ENCODE measurements at regions of chr2 and their contacts with region 1.

Region 1: GRCh38 chr2:168455648-168456520 is at the start of gene CERS6:
- DNase-seq: peak; percentile 99
- ATAC-seq: peak; percentile 97
- total RNA-seq, gene CERS6: 65.7 TPM

Region 2: GRCh38 chr2:168490015-168490874 is 34.4 kb after region 1 on chr2:
- intact Hi-C with region 1: loop called (anchors 2 kb)
- DNase-seq: no peak
- ATAC-seq: peak; percentile 76

Region 3: DNA sequence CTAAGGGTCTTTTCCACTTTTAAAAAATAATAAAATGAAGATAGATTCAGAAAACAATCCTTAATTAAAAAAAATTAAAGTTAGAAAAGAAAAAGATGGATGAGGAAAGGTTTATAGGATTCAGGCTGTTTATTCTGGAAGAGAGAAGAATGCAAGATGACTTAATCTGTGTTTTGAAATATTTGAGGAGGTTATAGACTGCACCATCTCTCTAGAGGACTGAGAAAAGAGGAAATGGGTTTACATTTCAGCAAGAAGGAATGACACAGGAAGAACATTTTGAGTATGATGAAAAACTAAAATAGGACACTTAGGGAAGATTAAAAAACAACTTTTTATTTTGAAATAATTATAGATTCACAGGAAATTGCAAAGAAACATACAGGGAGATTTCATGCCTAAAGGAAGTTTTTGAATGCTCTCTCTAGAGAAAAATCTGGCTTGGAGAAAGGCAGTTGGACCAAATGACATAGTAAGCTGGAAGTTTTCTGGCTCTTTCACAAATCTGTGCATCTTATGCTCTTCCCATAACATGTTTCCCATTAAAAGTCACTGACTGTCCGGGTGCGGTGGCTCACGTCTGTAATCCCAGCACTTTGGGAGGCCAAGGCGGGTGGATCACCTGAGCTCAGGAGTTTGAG is 75.2 kb after region 1 on chr2:
- intact Hi-C with region 1: loop called (anchors 2 kb)
- DNase-seq: no peak
- ATAC-seq: no peak

Region 4: DNA sequence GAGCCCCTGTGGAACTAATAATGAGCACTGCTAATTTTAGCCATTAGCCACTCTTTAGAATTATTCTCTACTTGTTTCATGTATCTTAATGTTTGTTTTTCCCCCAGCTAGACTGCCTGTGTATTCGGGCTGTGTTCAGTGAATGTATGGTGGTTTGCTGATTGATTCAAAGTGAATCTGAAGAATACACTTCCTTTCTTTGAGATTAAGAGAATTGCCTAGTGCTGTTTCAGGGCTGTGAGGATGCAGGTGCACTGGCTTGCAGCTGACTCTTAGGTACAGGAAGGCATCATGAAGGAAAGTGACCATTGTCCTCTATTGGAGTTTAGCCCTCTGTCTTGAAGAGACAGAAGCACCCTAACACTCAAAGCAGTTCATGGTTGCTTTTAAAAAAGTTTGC is 138.9 kb after region 1 on chr2:
- intact Hi-C with region 1: loop called (anchors 5 kb)
- DNase-seq: no peak
- ATAC-seq: no peak

Region 5: DNA sequence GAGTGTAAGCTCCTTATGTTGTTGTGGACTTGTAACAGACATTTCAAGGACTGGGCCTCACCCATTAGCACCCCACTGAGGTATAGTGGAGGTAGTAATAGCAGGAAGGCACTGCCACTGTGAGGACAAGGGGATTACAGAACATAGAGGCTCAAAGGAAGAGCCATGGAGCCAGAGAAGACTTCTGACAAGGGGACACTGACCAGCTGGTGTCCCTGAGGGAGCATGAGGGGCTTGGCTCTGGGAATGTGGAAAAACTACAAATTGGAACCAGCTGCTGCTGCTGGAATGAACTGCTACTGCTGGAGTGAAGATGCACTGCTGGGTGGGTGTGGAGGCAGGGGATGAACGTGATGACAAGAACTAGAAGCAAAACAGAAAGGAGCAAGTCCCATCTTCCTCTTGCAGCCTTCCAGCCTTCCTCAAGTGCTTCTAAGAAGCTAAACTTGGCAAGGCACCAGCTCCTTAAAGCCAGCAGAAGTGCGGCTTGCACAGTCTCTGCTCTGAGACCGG is 179.2 kb after region 1 on chr2:
- intact Hi-C with region 1: loop called (anchors 2 kb)
- DNase-seq: peak; percentile 78
- ATAC-seq: peak; percentile 59

Region 6: GRCh38 chr2:168758970-168759820 is 303.3 kb after region 1 on chr2:
- intact Hi-C with region 1: loop called (anchors 5 kb)
- DNase-seq: no peak
- ATAC-seq: peak; percentile 58